Heart right ventricle (tissue), 16 donors: ENCODE measurements at regions of chr7 and their contacts with region 1.

Region 1: DNA sequence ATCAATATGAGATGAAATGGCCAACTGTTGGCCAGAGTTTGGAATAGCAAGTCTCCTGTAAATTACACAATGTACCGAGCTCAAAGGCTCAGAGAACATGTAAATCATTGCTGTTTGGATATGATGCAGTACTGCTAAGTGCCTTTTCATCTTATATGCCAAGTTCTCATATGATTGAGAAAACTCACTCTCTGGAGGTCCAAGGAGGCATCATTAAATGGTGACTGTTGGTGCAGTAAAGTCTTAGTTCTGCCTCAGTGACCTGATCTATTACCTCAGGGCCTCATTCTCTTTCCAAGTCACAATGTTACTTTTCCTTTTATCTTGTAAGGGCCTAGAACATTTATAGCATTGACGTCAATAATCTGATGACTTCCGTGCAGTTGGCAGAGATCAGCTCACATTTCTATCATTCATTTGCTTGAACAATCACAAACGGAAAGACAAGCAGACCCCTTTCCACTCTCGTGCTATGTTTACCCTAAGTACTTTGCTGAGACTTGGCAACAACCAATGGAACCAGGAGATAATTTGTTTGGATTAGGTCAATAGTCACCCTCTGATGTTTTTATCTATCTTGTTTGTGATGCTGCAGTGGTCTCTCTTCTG is 32.6 kb upstream of the PDK4 start:
- DNase-seq: peak in 1 of 2 donors; percentile 30
- ATAC-seq: peak; percentile 31 to 96 (median 90)
- H3K4me3 ChIP-seq: no peak overlapping the region
- H3K27ac ChIP-seq: peak overlapping the region; percentile 40 to 89 (median 69)
- H3K4me1 ChIP-seq: peaks cover 0 to 19% (median 8%) of the 10 kb centered on the region in 9 donors
- H3K27me3 ChIP-seq: no peaks in the 10 kb centered on the region
- CTCF ChIP-seq: no peak

Region 2: DNA sequence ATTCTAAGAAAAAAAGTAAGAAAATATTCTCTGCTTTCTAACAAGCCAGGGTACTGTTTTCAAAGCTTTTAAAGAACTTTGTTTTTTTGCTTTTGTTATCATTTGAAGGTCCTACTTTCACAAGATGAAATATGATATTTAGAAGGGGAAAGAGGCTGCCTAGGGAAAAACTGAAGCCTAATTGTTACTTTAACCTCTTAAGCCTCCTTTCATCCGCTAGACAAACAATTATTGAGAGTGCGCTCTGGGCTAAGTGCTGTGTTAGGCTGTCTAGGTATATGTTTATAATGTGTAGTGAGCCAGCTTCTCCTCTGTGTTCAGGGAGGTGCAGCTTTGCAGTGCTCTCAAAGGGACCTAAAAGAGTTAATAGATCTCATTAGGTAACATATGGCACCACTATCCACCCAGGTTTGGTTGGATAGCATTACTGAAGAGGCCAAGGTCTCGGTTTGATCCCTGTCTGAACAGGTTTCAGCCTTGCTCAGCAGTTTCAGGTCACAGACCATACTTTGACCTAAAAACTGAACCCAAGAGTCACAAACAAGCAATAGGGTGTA is 50.6 kb before region 1 on chr7:
- intact Hi-C with region 1: no loop called
- DNase-seq: no peak
- ATAC-seq: no peak
- H3K4me3 ChIP-seq: no peak overlapping the region
- H3K27ac ChIP-seq: no peak overlapping the region
- H3K4me1 ChIP-seq: no peaks in the 10 kb centered on the region
- H3K27me3 ChIP-seq: no peaks in the 10 kb centered on the region
- CTCF ChIP-seq: no peak

Region 3: GRCh38 chr7:95608359-95609173 is 20.4 kb before region 1 on chr7:
- intact Hi-C with region 1: loop called in 3 of 10 experiments (anchors 1 to 2 kb)
- DNase-seq: peak; percentile 89 to 95
- ATAC-seq: peak; percentile 97 to 100 (median 99)
- H3K4me3 ChIP-seq: peak overlapping the region in 6 of 10 donors; percentile 27 to 41 (median 35)
- H3K27ac ChIP-seq: peak overlapping the region; percentile 60 to 96 (median 88)
- H3K4me1 ChIP-seq: peaks cover 4 to 77% (median 46%) of the 10 kb centered on the region in 9 donors
- H3K27me3 ChIP-seq: no peaks in the 10 kb centered on the region
- CTCF ChIP-seq: no peak

Region 4: DNA sequence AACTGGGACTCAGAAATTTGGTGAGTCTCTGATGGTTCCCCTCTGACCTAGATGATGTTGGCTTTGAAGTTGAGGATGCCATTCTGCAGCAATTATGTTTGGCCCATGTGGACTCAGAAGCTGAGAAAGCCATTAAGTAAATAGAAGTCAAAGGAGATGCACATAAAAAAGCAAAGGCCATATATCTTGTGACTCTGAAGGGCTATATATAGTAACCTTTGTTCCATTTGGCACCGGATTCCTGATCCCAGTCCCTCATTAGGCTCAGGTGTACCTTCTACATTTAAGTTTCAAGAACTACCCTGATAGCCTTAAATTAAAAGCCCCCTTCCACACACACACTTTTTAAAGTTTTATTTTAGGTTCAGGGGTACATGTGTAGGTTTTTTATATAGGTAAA is 17.4 kb after region 1 on chr7:
- intact Hi-C with region 1: no loop called
- DNase-seq: no peak
- ATAC-seq: no peak
- H3K4me3 ChIP-seq: no peak overlapping the region
- H3K27ac ChIP-seq: no peak overlapping the region
- H3K4me1 ChIP-seq: no peaks in the 10 kb centered on the region
- H3K27me3 ChIP-seq: no peaks in the 10 kb centered on the region
- CTCF ChIP-seq: no peak

Region 5: DNA sequence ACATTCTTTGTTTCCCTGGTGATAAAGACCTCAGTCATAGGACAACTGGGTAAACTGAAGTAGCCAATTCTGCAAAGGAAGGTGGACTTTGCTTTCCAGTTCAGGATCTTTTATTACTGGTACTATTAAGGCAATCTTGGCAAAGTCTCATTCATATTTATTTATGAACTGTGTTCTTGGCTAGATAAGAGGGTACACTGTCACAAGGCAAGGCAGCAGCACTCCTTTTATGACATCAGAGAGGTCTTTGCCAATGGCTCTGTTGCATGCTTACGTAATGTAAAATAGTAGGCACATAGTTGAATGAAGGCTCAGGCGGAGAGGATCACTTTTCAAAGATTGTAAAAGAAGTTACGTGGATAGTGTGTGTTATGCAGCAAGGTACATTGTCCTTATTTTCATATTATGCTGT is 31.1 kb after region 1 on chr7:
- intact Hi-C with region 1: loop called in 1 of 10 experiments (anchors 2 kb)
- DNase-seq: no peak
- ATAC-seq: peak in 6 of 8 donors; percentile 34 to 96 (median 92)
- H3K4me3 ChIP-seq: no peak overlapping the region
- H3K27ac ChIP-seq: peak overlapping the region in 1 of 10 donors; percentile 15
- H3K4me1 ChIP-seq: peaks cover 0 to 6% (median 0%) of the 10 kb centered on the region in 9 donors
- H3K27me3 ChIP-seq: no peaks in the 10 kb centered on the region
- CTCF ChIP-seq: no peak

Region 6: GRCh38 chr7:95675016-95675415 is 46.1 kb after region 1 on chr7:
- intact Hi-C with region 1: loop called in 1 of 10 experiments (anchors 5 kb)
- DNase-seq: no peak
- ATAC-seq: no peak
- H3K4me3 ChIP-seq: no peak overlapping the region
- H3K27ac ChIP-seq: no peak overlapping the region
- H3K4me1 ChIP-seq: no peaks in the 10 kb centered on the region
- H3K27me3 ChIP-seq: no peaks in the 10 kb centered on the region
- CTCF ChIP-seq: no peak